ENCODE measurements at regions of chr11 and their contacts with region 1.

Region 1: GRCh38 chr11:111878849-111879636 is at the starts of genes CFAP68 and FDXACB1:
- DNase-seq: peak; percentile 98
- H3K4me3 ChIP-seq: peak within 1 kb of the TSS; percentile 59 to 77
- H3K27ac ChIP-seq: peak within 1 kb of the TSS; percentile 92 to 94
- H3K4me1 ChIP-seq: peaks cover 0 to 14% (median 9%) of the 10 kb centered on the region in 4 donors
- H3K27me3 ChIP-seq: no peaks in the 10 kb centered on the region
- CTCF ChIP-seq: peak; percentile 96 to 98

Region 2: DNA sequence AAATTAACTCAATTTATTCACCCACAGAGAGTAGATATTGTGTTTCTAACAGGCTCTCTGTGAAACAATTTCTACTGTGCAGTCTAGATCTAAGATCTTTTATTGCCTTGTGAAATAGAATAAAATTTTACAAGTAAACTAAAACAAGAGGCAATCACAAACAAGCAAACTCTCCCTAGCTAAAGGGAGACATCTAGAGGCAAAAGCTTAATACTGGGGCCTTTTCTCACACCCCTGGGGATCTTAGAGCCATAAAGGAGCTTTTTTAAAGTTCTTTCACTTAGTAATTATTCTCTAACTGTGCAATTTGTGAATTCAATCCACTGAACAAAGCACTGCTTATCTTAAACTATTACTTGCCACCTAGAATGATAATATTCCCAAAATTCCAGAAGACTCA is 27.4 kb before region 1 on chr11:
- intact Hi-C with region 1: no loop called
- DNase-seq: no peak
- H3K4me3 ChIP-seq: no peak overlapping the region
- H3K27ac ChIP-seq: no peak overlapping the region
- H3K4me1 ChIP-seq: no peaks in the 10 kb centered on the region
- H3K27me3 ChIP-seq: no peaks in the 10 kb centered on the region
- CTCF ChIP-seq: no peak

Region 3: GRCh38 chr11:111957663-111958444 is 78.8 kb after region 1 on chr11:
- intact Hi-C with region 1: no loop called
- DNase-seq: no peak
- H3K4me3 ChIP-seq: no peak overlapping the region
- H3K27ac ChIP-seq: no peak overlapping the region
- H3K4me1 ChIP-seq: no peaks in the 10 kb centered on the region
- H3K27me3 ChIP-seq: no peaks in the 10 kb centered on the region
- CTCF ChIP-seq: no peak

Region 4: GRCh38 chr11:111982019-111982464 is 103.0 kb after region 1 on chr11:
- intact Hi-C with region 1: loop called (anchors 5 kb)
- DNase-seq: peak in 1 of 2 donors; percentile 35
- H3K4me3 ChIP-seq: no peak overlapping the region
- H3K27ac ChIP-seq: peak overlapping the region in 1 of 2 donors; percentile 17
- H3K4me1 ChIP-seq: peaks cover 0 to 30% (median 17%) of the 10 kb centered on the region in 4 donors
- H3K27me3 ChIP-seq: no peaks in the 10 kb centered on the region
- CTCF ChIP-seq: peak; percentile 46 to 49

Region 5: DNA sequence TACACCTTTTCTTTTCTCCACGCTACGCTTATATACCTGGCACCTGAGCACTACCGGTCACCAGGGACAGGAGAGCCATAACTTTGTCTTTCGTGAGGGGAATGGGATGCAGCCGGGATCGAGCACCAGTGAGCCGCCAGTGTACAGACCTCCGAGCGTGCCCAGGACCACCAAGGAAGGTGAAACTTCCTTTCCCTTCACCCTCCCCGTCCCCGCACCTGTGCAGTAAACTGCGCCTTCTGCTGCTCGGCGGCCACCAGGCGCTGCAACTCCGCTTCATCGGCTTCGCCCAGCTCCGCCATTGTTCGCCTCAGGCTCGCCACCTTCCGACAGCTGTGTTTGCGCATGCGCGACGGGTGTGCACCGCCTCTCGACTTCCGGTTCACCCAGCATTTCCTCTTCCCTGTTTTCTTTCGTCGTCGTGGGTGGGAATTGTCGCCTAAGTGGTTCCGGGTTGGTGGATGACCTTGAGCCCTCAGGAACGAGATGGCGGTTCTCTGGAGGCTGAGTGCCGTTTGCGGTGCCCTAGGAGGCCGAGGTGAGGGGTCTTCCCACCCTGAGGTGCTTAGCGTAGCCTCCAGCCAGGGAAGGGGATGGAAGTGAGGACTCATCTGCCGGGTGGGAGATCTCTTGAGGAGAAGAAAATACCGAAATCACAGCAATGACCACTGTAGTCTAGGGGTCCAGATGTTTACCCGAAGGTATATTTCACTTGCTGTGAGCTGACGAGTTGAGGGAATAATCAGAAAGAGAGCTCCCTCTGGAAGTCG is 207.6 kb after region 1 on chr11 and contains the starts of genes SDHD and TIMM8B:
- intact Hi-C with region 1: loop called (anchors 5 kb)
- DNase-seq: peak; percentile 94 to 98
- H3K4me3 ChIP-seq: peak within 1 kb of the TSS; percentile 75 to 82
- H3K27ac ChIP-seq: peak within 1 kb of the TSS; percentile 76 to 83
- H3K4me1 ChIP-seq: peaks cover 0 to 33% (median 24%) of the 10 kb centered on the region in 4 donors
- H3K27me3 ChIP-seq: no peaks in the 10 kb centered on the region
- CTCF ChIP-seq: peak; percentile 27 to 32

Measured in tibial artery (tissue), 4 donors.